Posterior vena cava (tissue), 2 donors: ENCODE measurements at regions of chr11 and their contacts with region 1.

Region 1: DNA sequence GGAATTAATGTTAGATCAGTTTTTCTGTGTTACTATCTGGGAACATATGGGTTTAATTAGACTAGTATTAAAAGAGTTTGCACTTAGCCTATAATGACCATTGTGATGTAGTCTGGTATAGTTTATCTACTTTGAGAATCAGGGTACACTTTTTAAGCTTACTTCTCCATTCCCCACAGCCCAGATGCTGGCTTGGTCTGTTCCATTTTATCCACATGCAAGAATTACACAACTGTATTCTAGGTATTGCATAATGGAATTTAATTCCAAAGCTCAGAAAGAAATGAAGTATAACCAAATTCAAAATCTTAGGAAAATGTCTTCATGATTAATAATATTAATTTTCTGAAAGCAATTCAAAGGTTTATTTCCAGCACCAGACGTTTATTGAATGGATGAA is 122.2 kb upstream of the PDGFD start:
- DNase-seq: no peak

Region 2: DNA sequence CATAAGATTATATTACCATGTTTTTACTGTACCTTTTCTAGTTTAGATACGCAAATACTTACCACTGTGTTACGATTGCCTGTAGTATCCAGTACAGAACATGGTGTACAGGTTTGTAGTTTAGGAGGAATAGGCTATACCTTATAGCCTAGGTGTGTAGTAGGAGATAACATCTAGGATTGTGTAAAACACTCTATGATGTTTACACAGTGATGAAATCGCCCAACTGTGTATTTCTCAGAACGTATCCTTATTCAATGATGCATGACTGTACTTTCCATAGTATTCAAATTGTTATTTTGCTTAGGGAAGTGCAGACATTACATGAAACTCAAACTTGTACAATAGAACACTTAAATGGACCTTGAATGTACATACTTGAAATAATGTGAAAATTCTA is 65.9 kb after region 1 on chr11:
- intact Hi-C with region 1: loop called in 1 of 2 experiments (anchors 2 kb)
- DNase-seq: no peak

Region 3: GRCh38 chr11:104380358-104380757 is 94.2 kb after region 1 on chr11:
- intact Hi-C with region 1: no loop called
- DNase-seq: no peak